Heart right ventricle (tissue), 16 donors: ENCODE measurements at regions of chr17 and their contacts with region 1.

Region 1: GRCh38 chr17:1783834-1784611 is 22.2 kb downstream of the SERPINF1 start:
- DNase-seq: peak; percentile 68 to 87
- ATAC-seq: peak; percentile 78 to 85 (median 84)
- H3K4me3 ChIP-seq: peak overlapping the region in 6 of 10 donors; percentile 2 to 27 (median 12)
- H3K27ac ChIP-seq: peak overlapping the region; percentile 89 to 95 (median 93)
- H3K4me1 ChIP-seq: peaks cover 21 to 92% (median 61%) of the 10 kb centered on the region in 9 donors
- H3K27me3 ChIP-seq: no peaks in the 10 kb centered on the region
- CTCF ChIP-seq: peak; percentile 37 to 82 (median 70)

Region 2: DNA sequence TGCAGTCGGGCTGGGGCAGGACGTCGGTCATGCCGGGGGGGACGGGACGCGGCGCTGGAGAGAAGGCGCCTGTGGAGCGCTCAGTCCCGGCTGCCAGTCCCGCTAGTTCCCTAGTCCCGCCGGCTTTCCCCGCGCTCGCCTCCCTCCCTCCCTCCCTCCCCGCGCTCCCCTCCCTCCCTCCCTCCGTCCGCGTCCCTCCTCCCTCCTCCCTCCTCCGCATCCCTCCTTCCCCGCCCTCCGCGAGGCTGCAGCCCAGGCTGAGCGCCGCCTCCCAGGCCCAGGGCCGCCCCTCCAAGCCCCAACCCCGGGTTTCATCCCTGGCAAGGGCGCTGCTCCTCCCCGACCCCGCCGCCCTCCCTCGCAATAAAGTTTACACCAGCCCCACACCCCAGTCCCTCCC is 752.3 kb before region 1 on chr17:
- intact Hi-C with region 1: no loop called
- DNase-seq: peak; percentile 82 to 85
- ATAC-seq: peak; percentile 56 to 81 (median 66)
- H3K4me3 ChIP-seq: peak overlapping the region in 9 of 10 donors; percentile 34 to 59 (median 55)
- H3K27ac ChIP-seq: peak overlapping the region in 8 of 10 donors; percentile 59 to 85 (median 78)
- H3K4me1 ChIP-seq: peaks cover 36 to 86% (median 64%) of the 10 kb centered on the region in 9 donors
- H3K27me3 ChIP-seq: no peaks in the 10 kb centered on the region
- CTCF ChIP-seq: no peak

Region 3: GRCh38 chr17:1648963-1649843 is 134.8 kb before region 1 on chr17:
- intact Hi-C with region 1: loop called in 1 of 10 experiments (anchors 5 kb)
- DNase-seq: peak; percentile 93 to 97
- ATAC-seq: peak; percentile 34 to 77 (median 62)
- H3K4me3 ChIP-seq: peak overlapping the region; percentile 56 to 94 (median 81)
- H3K27ac ChIP-seq: peak overlapping the region; percentile 97 to 100 (median 99)
- H3K4me1 ChIP-seq: peaks cover 34 to 61% (median 55%) of the 10 kb centered on the region in 9 donors
- H3K27me3 ChIP-seq: no peaks in the 10 kb centered on the region
- CTCF ChIP-seq: peak; percentile 75 to 95 (median 88)

Region 4: GRCh38 chr17:1673041-1673785 is 110.8 kb before region 1 on chr17:
- intact Hi-C with region 1: loop called in 8 of 10 experiments (anchors 5 to 10 kb)
- DNase-seq: no peak
- ATAC-seq: no peak
- H3K4me3 ChIP-seq: no peak overlapping the region
- H3K27ac ChIP-seq: no peak overlapping the region
- H3K4me1 ChIP-seq: peaks cover 0 to 28% (median 14%) of the 10 kb centered on the region in 9 donors
- H3K27me3 ChIP-seq: no peaks in the 10 kb centered on the region
- CTCF ChIP-seq: no peak

Region 5: DNA sequence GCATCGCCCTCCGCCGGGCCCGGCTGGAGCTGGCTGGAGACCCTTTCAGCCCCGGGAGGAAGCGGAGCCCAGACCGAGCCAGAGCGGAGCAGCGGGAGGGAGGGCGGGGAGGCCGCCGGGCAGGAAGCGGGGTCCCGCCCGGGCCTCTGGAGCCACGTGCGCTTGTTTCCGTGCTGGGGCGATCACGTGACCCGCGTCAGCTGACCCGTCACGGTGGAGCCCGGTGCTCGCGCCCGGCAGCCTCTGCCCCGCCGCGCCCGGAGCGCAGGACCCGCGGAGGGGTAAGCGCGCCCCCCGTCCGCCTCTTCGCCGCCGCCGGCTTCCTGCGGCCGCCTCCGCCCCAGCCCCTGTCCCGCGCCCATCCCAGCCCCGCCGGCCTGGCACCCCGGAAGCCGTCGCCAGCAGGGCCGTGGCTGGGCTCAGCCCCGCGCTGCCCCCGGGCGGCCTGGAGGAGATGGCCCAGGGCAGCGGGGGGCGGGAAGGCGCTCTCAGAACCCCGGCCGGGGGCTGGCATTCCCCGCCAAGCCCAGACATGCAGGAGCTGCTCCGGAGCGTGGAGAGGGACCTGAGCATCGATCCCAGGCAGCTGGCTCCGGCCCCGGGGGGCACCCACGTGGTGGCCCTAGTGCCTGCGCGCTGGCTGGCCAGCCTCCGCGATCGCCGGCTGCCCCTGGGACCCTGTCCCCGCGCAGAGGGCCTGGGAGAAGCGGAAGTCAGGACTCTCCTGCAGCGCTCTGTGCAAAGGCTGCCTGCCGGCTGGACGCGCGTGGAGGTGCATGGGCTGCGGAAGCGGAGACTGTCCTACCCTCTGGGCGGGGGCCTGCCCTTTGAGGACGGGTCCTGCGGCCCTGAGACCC is 59.3 kb before region 1 on chr17 and contains the start of gene WDR81:
- intact Hi-C with region 1: loop called in 6 of 10 experiments (anchors 2 to 5 kb)
- DNase-seq: peak; percentile 93
- ATAC-seq: peak; percentile 73 to 92 (median 89)
- H3K4me3 ChIP-seq: peak within 1 kb of the TSS; percentile 66 to 81 (median 72)
- H3K27ac ChIP-seq: peak within 1 kb of the TSS; percentile 76 to 97 (median 86)
- H3K4me1 ChIP-seq: peaks cover 11 to 78% (median 28%) of the 10 kb centered on the region in 9 donors
- H3K27me3 ChIP-seq: no peaks in the 10 kb centered on the region
- CTCF ChIP-seq: peak in 2 of 9 donors; percentile 2 to 26
- total RNA-seq, gene WDR81: 7.7 to 16.9 (median 9.2) TPM

Region 6: DNA sequence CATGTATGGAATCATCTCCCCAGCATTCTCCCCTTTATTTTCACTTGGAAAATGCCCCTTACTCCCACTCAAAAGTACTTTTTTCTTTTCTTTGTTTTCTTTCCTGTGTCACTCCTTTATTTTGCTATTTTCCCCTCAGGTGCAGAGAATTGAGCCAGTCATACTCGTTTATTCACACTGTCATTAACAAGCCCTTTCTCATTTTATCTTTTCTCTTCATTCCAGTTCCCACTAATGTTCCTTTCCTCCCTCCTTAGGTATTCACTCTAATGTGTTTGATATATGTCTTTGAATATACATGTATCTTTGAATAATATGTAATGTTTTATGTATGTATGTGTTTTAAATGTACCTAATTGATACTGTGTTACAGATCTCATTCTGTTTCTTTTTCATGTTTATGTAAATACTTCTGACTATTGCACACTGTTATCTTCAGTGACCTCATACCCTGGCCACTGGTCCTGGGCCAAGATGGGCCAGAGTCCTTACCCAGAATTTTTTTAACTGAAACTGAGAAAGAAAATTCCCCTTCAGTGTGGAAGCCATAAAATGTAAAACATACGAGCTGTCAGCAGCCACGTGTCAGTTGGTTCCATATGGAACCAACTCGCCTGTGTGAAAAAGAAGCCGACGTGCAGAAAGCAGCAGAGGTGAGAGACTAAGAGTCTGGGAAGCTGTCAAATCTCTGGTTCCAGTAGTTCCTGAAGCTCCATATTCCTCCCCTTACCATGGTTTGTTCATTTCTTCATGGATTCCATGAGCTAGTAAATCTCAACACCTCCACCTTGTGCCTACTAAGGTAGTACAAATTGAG is 525.5 kb after region 1 on chr17:
- intact Hi-C with region 1: no loop called
- DNase-seq: no peak
- ATAC-seq: no peak
- H3K4me3 ChIP-seq: no peak overlapping the region
- H3K27ac ChIP-seq: no peak overlapping the region
- H3K4me1 ChIP-seq: peaks cover 0 to 5% (median under 1%) of the 10 kb centered on the region in 9 donors
- H3K27me3 ChIP-seq: no peaks in the 10 kb centered on the region
- CTCF ChIP-seq: no peak